B cell (primary cell): ENCODE measurements at regions of chr7 and their contacts with region 1.

Region 1: GRCh38 chr7:98841179-98841997 is 28.4 kb downstream of the TMEM130 start:
- DNase-seq: peak; percentile 75
- ATAC-seq: peak; percentile 92
- H3K4me3 ChIP-seq: no peak overlapping the region
- H3K4me3 Mint-ChIP-seq: no peak overlapping the region
- H3K27ac ChIP-seq: no peak overlapping the region
- H3K27ac Mint-ChIP-seq: no peak overlapping the region
- H3K4me1 ChIP-seq: no peaks in the 10 kb centered on the region
- H3K4me1 Mint-ChIP-seq: no peaks in the 10 kb centered on the region
- H3K27me3 ChIP-seq: no peaks in the 10 kb centered on the region
- H3K27me3 Mint-ChIP-seq: peaks cover 20% of the 10 kb centered on the region
- CTCF ChIP-seq: peak; percentile 96

Region 2: DNA sequence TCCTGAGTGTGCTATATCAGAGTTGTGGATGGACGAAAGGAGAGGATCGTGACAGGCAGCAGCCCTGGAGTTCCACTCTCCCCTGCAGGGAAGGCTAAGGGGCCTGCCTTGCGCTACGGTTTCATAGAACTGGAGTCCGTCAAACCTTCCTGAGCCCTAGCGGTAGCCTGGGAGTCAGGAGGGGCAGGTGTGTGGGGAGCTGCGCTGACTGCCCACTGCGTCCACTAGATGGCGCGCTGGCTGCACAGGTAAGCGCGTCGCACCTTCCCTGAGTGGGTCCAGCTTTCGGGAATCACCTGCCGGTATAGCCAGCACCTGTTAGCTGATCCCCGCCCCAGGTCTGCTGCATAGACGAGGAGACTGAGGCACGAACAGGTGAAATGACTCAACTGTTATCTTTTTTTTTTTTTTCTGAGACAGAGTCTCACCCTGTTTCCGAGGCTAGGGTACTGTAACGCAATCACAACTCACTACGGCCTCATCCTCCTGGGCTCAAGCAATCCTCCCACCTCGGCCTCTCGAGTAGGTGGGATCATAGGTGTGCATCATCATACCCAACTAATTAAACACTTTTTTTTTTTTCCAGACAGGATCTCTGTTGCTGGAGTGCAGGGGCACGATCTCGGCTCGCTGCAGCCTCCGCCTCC is 420.3 kb before region 1 on chr7:
- CTCF ChIA-PET with region 1: interaction called, 17 read pairs
- POLR2A ChIA-PET with region 1: no interaction called
- intact Hi-C with region 1: no loop called
- DNase-seq: peak; percentile 73
- ATAC-seq: peak; percentile 75
- H3K4me3 ChIP-seq: no peak overlapping the region
- H3K4me3 Mint-ChIP-seq: no peak overlapping the region
- H3K27ac ChIP-seq: no peak overlapping the region
- H3K27ac Mint-ChIP-seq: no peak overlapping the region
- H3K4me1 ChIP-seq: peaks cover 4 to 5% of the 10 kb centered on the region in 2 donors
- H3K4me1 Mint-ChIP-seq: no peaks in the 10 kb centered on the region
- H3K27me3 ChIP-seq: peaks cover 0 to 21% (median 1%) of the 10 kb centered on the region in 4 experiments
- H3K27me3 Mint-ChIP-seq: peaks cover 30% of the 10 kb centered on the region
- CTCF ChIP-seq: peak; percentile 91

Region 3: DNA sequence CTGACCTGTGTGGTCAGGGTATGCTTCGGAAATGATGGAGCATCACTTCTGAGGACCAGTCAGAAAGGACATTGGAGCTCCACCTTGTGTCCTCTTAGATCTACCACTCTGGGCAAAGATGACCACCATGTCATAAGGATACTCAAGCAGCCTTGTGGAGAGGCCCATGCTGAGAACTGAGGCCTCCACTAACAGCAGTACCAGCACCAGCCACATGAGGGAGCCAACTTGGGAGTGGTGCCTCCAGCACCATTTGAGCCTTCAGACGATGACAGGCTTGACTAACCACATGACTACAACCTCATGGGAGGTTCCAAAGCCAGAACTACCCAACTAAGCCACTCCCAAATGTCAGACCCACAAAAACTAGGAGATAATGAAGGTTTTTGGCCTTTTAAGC is 108.4 kb before region 1 on chr7:
- CTCF ChIA-PET with region 1: interaction called, 3 read pairs
- POLR2A ChIA-PET with region 1: interaction called, 9 read pairs
- intact Hi-C with region 1: loop called (anchors 2 kb)
- DNase-seq: peak; percentile 35
- ATAC-seq: peak; percentile 33
- H3K4me3 ChIP-seq: no peak overlapping the region
- H3K4me3 Mint-ChIP-seq: no peak overlapping the region
- H3K27ac ChIP-seq: no peak overlapping the region
- H3K27ac Mint-ChIP-seq: no peak overlapping the region
- H3K4me1 ChIP-seq: no peaks in the 10 kb centered on the region
- H3K4me1 Mint-ChIP-seq: no peaks in the 10 kb centered on the region
- H3K27me3 ChIP-seq: peaks cover 0 to 4% (median 0%) of the 10 kb centered on the region in 4 experiments
- H3K27me3 Mint-ChIP-seq: peaks cover 20% of the 10 kb centered on the region
- CTCF ChIP-seq: no peak

Region 4: GRCh38 chr7:98785929-98786571 is 55.3 kb before region 1 on chr7:
- CTCF ChIA-PET with region 1: no interaction called
- POLR2A ChIA-PET with region 1: no interaction called
- intact Hi-C with region 1: no loop called
- DNase-seq: no peak
- ATAC-seq: no peak
- H3K4me3 ChIP-seq: no peak overlapping the region
- H3K4me3 Mint-ChIP-seq: no peak overlapping the region
- H3K27ac ChIP-seq: no peak overlapping the region
- H3K27ac Mint-ChIP-seq: no peak overlapping the region
- H3K4me1 ChIP-seq: no peaks in the 10 kb centered on the region
- H3K4me1 Mint-ChIP-seq: no peaks in the 10 kb centered on the region
- H3K27me3 ChIP-seq: peaks cover 0 to 10% (median 0%) of the 10 kb centered on the region in 4 experiments
- H3K27me3 Mint-ChIP-seq: peaks cover 24% of the 10 kb centered on the region
- CTCF ChIP-seq: no peak

Region 5: GRCh38 chr7:98805956-98806838 is 35.2 kb before region 1 on chr7:
- CTCF ChIA-PET with region 1: no interaction called
- POLR2A ChIA-PET with region 1: no interaction called
- intact Hi-C with region 1: no loop called
- DNase-seq: no peak
- ATAC-seq: no peak
- H3K4me3 ChIP-seq: no peak overlapping the region
- H3K4me3 Mint-ChIP-seq: no peak overlapping the region
- H3K27ac ChIP-seq: no peak overlapping the region
- H3K27ac Mint-ChIP-seq: no peak overlapping the region
- H3K4me1 ChIP-seq: peaks cover 14 to 15% of the 10 kb centered on the region in 2 donors
- H3K4me1 Mint-ChIP-seq: peaks cover 9% of the 10 kb centered on the region
- H3K27me3 ChIP-seq: peaks cover 0 to 29% (median 15%) of the 10 kb centered on the region in 4 experiments
- H3K27me3 Mint-ChIP-seq: peaks cover 17% of the 10 kb centered on the region
- CTCF ChIP-seq: no peak

Region 6: DNA sequence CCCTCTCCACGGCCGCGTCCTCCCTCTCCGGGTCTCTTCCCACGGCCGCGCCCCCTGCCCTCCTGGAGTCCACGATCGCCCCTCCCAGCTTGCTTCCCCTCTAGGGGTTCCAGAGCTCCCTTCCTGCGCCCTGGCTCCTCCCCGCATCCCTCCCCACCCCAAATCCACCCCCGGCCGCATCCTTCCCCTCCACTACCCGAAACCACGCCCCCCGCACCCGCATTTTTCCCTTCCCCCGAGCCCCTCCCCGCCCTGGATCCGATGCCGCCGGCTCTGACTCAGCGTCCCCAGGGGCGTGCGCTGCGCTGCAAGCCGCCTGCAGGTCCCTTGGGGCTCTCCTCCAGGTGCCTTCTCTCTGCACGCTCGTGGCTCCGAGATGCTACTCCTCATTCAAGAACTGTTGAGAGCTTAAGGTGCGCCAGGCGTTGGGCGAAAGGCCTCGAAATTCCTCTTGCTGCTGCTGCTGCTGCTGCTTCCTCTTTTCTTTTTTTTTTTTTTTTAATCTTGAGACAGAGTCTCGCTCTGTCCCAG is 28.8 kb after region 1 on chr7:
- CTCF ChIA-PET with region 1: interaction called, 24 read pairs
- POLR2A ChIA-PET with region 1: no interaction called
- intact Hi-C with region 1: no loop called
- DNase-seq: peak; percentile 83
- ATAC-seq: peak; percentile 97
- H3K4me3 ChIP-seq: peak overlapping the region; percentile 29 to 54 (median 50)
- H3K4me3 Mint-ChIP-seq: peak overlapping the region; percentile 90
- H3K27ac ChIP-seq: no peak overlapping the region
- H3K27ac Mint-ChIP-seq: peak overlapping the region; percentile 77
- H3K4me1 ChIP-seq: peaks cover 16 to 22% of the 10 kb centered on the region in 2 donors
- H3K4me1 Mint-ChIP-seq: peaks cover 12% of the 10 kb centered on the region
- H3K27me3 ChIP-seq: peaks cover 0 to 21% (median 9%) of the 10 kb centered on the region in 4 experiments
- H3K27me3 Mint-ChIP-seq: peaks cover 4% of the 10 kb centered on the region
- CTCF ChIP-seq: no peak

Region 7: GRCh38 chr7:98907570-98907969 is 66.2 kb after region 1 on chr7:
- CTCF ChIA-PET with region 1: no interaction called
- POLR2A ChIA-PET with region 1: no interaction called
- intact Hi-C with region 1: no loop called
- DNase-seq: no peak
- ATAC-seq: no peak
- H3K4me3 ChIP-seq: no peak overlapping the region
- H3K4me3 Mint-ChIP-seq: no peak overlapping the region
- H3K27ac ChIP-seq: no peak overlapping the region
- H3K27ac Mint-ChIP-seq: no peak overlapping the region
- H3K4me1 ChIP-seq: no peaks in the 10 kb centered on the region
- H3K4me1 Mint-ChIP-seq: no peaks in the 10 kb centered on the region
- H3K27me3 ChIP-seq: no peaks in the 10 kb centered on the region
- H3K27me3 Mint-ChIP-seq: no peaks in the 10 kb centered on the region
- CTCF ChIP-seq: no peak